ENCODE measurements at regions of chr1 and their contacts with region 1.

Region 1: GRCh38 chr1:28088168-28088961 is at the start of gene EYA3:
- DNase-seq: peak; percentile 100

Region 2: GRCh38 chr1:28104866-28105467 is 16.6 kb after region 1 on chr1:
- CTCF ChIA-PET with region 1: interaction called, 20 read pairs
- POLR2A ChIA-PET with region 1: interaction called, 11 read pairs
- DNase-seq: peak; percentile 92

Region 3: GRCh38 chr1:28111157-28111556 is 22.8 kb after region 1 on chr1:
- CTCF ChIA-PET with region 1: interaction called, 9 read pairs
- POLR2A ChIA-PET with region 1: interaction called, 11 read pairs
- DNase-seq: no peak

Region 4: DNA sequence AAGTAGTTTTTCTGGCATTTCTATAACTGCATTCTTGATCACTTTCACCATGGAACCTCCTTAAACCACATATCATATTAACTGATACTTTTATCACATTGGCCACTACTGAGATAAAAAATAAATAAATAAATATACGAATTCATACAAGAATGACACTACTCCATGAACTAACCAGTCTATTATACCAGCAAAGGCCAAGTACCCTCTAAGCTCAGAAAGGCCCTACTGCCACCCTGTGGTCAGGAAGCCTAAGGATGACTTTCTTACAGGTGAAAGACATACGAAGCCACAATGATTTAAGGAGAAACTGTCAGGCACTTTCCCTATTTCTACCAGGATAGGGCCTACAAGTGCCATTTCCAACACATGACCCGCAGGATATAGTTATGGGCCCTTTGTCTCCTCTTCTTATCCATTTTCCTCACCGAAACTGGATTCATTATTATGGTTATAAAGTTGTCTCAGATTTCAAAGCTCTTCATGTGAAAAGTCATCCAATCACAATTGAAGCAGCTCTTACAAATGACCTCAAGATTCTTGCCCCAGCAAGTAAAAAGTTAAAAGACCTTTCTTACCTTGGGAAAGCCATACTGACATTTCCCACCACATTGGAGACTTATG is 120.6 kb after region 1 on chr1:
- CTCF ChIA-PET with region 1: interaction called, 11 read pairs
- POLR2A ChIA-PET with region 1: no interaction called
- DNase-seq: peak; percentile 75

Region 5: DNA sequence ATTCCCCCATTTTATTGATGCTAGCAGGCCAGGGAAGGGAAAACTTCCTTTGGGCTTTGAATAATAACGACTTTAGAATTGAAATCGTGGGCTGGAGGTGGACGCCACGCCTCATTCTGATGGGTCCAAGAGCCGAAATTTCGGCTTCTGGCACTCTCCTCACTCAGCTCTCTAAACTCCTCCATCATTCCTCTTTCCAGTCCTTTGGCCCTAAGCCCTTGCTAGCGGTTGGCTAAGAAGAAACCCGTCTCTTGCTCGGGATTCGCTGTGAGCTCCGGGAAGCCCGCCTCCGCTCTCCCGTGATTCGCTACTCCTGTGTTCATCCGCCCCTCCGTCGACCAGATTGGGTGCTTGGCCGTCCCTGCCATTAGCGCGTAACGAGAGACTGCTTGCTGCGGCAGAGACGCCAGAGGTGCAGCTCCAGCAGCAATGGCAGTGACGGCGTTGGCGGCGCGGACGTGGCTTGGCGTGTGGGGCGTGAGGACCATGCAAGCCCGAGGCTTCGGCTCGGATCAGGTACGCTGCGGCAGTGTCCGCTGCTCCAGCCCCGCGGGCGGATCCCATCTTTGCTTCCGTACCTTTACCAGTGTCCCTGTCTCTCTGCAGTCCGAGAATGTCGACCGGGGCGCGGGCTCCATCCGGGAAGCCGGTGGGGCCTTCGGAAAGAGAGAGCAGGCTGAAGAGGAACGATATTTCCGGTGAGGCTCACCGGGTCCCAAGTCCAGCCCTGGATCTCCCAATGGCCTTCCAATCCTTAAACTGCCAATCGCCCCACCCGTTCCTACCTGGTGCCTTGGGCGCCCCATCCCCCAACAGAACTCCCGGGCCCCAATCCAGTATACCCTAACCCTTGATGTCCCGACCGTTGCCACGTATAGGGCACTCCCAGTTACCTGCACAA is 147.6 kb after region 1 on chr1 and contains the start of gene ATP5IF1:
- CTCF ChIA-PET with region 1: no interaction called
- POLR2A ChIA-PET with region 1: interaction called, 10 read pairs
- DNase-seq: peak; percentile 100

Measured in HEK293T (cell line).